Activated CD4-positive, alpha-beta T cell treated with anti-CD3 and anti-CD28 coated beads, Interleukin-2, amount 10 ng/mL, durations not matched to agents 24 days and 14 days (primary cell): ENCODE measurements at regions of chr1 and their contacts with region 1.

Region 1: DNA sequence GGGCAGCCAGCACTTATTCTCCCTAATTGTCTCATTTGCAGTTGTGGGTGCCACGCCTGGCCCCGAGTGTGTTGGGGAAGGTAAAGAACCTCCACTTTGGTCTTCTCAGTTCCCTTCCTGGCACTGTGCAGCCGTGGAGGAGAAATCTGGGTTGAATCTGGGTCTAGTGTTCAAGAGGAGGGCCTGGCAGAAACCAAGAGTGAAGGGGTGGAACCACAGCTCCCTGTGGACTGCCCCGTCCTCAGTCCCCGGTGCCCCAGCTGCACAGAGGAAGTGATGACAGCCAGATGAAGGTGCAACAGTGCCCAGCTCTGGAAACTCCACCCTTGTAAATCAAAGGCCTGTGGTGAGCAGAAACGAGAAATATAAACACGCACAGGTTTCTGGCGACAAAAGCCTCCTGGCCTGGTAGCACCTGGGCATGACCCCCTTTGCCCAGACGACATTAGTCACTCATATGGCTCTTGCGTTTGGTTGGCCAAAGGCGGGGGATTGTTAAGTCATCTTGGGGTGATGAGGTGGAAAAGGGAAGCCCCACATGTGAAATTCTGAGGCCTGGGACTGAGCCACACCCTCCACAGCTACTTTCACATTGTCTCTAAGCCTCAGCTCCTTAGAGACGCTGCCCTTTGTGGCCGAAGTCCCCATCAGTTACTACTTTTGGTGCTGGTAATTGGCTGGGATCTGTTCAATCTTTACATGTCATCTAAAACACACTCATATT is 4.2 kb upstream of the ECE1 start:
- DNase-seq: peak; percentile 94
- H3K4me3 Mint-ChIP-seq: peak overlapping the region; percentile 88
- H3K27ac Mint-ChIP-seq: peak overlapping the region; percentile 98
- H3K4me1 Mint-ChIP-seq: peaks cover 73% of the 10 kb centered on the region
- H3K27me3 Mint-ChIP-seq: no peaks in the 10 kb centered on the region

Region 2: GRCh38 chr1:20732588-20733360 is 561.7 kb before region 1 on chr1 and contains the start of gene SH2D5:
- intact Hi-C with region 1: loop called (anchors 10 kb)
- DNase-seq: peak; percentile 90
- H3K4me3 Mint-ChIP-seq: peak within 1 kb of the TSS; percentile 88
- H3K27ac Mint-ChIP-seq: peak within 1 kb of the TSS; percentile 70
- H3K4me1 Mint-ChIP-seq: peaks cover 14% of the 10 kb centered on the region
- H3K27me3 Mint-ChIP-seq: peaks cover 37% of the 10 kb centered on the region
- total RNA-seq, gene SH2D5: 0.23 and 0.24 TPM in 2 replicates

Region 3: DNA sequence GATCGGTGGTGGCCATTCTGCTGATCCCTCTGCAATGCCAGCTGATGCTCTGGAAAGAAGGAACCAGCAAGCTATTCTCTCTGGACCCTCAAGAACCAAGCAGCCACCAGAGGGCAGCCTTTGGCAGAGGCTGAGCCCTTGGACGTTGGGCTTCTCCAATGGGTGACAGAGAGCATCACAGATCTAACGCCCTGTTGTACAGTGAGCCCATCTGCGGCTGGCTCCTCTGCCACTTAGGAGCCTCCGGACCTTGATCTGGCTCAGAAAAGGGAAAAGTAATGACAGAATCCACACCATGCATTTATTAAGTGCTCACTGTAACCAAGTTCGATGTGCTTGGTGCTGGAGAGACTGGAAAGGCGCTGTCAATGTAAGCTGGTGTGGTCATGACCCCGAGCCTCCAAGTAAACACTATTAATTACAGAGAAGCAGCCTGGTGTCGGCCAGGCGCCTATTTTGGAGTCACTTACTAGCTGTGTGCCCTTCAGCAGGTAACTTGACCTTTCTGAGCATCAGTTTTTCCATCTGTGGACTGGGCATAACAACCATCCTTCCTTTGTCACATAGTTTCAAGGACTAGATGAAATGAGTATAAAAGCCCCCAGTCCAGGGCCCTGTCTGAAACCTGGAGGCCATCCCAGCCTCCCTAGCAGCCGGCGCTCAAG is 39.0 kb before region 1 on chr1:
- intact Hi-C with region 1: loop called (anchors 2 kb)
- DNase-seq: peak; percentile 94
- H3K4me3 Mint-ChIP-seq: no peak overlapping the region
- H3K27ac Mint-ChIP-seq: peak overlapping the region; percentile 82
- H3K4me1 Mint-ChIP-seq: peaks cover 31% of the 10 kb centered on the region
- H3K27me3 Mint-ChIP-seq: no peaks in the 10 kb centered on the region

Region 4: DNA sequence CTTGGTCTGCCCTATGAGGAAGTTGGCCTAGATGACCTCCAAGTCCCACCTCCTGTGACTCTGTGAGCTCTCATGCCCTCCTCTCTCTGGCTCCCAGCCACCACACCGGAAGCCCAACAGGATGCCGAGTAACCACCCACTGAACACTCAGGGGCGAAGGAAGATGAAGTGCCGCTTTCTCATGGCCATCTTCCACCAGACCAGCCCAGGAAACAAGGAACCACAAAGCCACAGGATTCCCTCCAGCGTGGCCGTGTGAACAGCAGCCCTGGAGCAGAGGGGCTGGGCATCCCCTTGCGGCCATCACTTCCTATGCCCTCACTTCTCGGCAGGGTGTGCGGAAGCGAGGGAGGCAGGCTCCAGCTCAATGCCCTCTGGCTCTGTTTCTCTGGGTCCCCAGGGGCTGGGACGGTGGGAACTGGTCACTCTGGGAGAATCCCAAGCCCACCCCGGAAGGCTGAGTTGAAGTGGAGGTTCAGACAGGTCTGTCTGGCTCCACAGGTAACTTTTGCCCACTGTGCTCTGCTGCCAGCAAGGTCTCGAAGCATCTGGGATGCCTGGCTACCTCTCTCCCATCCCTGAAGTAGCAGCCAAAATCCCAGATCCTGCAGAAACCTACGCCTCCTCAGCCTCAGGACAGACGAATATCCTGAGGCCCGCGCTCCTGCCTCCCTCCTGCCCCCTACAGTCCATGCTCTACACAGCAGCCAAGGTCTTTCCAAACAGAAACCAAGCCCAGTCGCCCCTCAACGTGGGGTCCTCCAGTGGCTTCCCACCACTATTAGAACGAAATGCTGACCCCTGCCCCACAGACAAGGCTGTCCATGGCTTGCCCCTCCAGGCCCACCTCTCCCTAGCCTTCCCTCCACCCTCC is 40.0 kb after region 1 on chr1:
- intact Hi-C with region 1: loop called (anchors 2 kb)
- DNase-seq: peak; percentile 95
- H3K4me3 Mint-ChIP-seq: peak overlapping the region; percentile 80
- H3K27ac Mint-ChIP-seq: peak overlapping the region; percentile 96
- H3K4me1 Mint-ChIP-seq: peaks cover 78% of the 10 kb centered on the region
- H3K27me3 Mint-ChIP-seq: no peaks in the 10 kb centered on the region

Region 5: DNA sequence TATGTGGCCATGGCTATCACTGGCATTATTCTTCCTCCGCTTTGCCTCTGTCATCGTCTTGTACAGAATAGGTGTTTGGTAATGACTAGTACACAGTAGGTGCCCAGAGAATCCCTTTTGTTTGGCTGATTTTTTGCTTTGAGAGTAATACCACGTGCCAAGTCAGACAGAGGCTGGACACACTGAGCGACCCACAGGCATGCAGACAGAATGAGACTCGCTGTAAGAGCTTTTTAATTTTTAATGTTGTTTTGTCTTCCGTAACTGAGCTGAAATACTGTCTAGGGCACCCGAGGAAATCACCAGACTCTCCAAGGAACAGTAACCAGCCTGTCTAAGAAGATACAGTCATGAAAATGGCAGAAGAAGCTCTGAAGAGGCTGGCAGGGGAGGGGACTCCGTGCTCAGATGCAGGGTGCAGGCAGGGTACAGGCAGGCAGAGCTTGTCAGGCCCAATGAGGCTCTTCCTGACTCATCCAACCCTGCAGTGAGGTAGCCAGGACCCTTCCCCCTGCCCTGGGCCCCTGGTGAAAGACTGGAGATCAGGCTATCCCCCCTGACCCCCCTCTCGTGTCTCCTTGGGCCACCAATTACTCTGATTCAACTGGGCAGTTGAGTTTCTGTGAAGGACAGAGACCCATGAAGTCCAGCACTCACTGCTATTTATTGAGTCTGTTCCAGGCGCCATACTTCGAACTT is 55.9 kb after region 1 on chr1:
- intact Hi-C with region 1: no loop called
- DNase-seq: no peak
- H3K4me3 Mint-ChIP-seq: no peak overlapping the region
- H3K27ac Mint-ChIP-seq: no peak overlapping the region
- H3K4me1 Mint-ChIP-seq: no peaks in the 10 kb centered on the region
- H3K27me3 Mint-ChIP-seq: peaks cover 5% of the 10 kb centered on the region

Region 6: DNA sequence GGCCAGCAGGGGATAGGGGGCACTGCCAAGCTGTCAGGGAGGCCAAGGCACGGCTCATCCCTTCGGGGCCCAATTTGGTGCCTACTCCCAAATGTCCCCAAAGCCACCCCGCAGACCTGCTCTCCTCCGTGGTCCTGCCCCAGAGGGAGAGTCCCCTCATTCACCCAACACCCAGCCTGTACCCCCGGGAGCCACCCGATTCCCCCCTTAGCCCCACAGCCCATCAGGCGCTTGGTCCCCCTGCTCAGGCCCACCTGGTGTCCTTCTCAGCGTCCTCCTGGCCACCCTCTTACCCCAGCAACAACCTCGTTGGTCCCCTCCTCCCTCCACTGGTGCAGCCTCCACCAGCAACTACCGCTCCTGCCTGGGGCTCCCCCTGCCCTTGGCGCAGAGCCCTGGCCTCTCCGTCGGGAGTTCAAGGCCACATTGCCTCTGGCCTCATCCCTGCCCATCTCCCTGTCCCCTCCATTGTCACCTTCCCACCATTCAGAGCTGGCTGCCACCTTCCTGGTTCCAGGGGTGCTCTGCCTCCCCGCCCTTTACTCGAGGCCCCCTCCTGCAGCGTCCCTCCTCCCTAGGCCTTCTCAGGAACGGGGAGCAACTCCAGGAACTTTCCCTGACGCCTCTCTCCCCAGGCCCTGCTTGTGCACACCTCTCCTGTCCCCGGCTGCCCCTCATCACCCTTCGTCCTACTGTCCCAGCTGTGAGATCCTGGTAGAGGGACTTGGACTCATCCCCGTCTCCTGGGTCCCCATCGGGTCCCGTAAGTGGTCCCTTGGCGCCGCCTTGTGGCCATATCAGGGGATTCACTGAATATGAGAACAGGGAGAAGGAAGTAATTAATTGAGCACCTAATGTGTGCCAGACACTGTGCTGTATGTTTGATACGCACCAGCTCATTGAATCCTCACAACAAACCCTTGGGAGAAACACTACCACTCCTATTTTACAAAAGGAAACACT is 300.8 kb after region 1 on chr1:
- intact Hi-C with region 1: no loop called
- DNase-seq: peak; percentile 86
- H3K4me3 Mint-ChIP-seq: no peak overlapping the region
- H3K27ac Mint-ChIP-seq: no peak overlapping the region
- H3K4me1 Mint-ChIP-seq: no peaks in the 10 kb centered on the region
- H3K27me3 Mint-ChIP-seq: peaks cover 4% of the 10 kb centered on the region

Region 7: DNA sequence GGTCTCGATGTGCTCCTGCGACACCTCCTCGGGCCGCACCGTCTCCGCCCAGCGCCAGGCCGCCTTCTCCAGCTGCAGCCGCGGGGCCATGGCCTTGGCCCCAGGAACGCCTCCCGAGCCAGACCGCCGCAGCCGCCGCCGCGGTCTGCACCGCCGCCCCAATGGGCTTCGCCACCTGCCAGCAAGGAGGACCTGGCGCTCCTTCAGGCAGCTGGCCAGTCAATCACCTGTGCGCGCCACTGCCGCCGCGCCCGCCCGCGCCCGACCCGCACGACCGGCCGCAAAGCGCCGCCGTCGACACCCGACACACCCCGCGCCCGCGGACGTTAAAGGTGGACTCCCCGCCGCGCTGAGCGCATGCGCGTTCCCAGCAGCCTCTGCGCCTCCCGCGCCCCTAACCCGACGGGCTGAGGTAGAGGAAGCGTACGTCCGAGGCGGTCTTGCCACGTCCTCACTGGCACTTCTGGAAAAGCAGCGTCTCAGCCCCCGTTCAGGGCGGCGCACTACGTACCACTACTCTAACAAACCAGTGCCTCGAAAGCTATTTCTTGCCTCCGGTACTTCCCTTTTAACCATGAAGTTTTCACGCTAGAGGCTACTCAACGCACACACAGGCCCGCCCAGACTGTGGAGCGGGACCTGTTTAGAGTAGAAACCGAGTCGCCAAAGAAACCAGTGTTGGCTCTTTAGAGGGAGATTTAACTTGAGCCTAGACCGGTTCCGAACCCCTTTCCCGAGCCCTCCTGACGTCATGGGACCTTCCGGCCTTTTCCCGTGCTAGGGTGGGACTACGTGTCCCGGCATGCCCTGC is 488.6 kb after region 1 on chr1 and contains the start of gene USP48:
- intact Hi-C with region 1: loop called (anchors 10 kb)
- DNase-seq: peak; percentile 99
- H3K4me3 Mint-ChIP-seq: peak within 1 kb of the TSS; percentile 94
- H3K27ac Mint-ChIP-seq: peak within 1 kb of the TSS; percentile 100
- H3K4me1 Mint-ChIP-seq: peaks cover 18% of the 10 kb centered on the region
- H3K27me3 Mint-ChIP-seq: peaks cover 4% of the 10 kb centered on the region
- total RNA-seq, gene USP48: 92.0 and 92.7 TPM in 2 replicates